ENCODE measurements at regions of chr14 and their contacts with region 1.

Region 1: DNA sequence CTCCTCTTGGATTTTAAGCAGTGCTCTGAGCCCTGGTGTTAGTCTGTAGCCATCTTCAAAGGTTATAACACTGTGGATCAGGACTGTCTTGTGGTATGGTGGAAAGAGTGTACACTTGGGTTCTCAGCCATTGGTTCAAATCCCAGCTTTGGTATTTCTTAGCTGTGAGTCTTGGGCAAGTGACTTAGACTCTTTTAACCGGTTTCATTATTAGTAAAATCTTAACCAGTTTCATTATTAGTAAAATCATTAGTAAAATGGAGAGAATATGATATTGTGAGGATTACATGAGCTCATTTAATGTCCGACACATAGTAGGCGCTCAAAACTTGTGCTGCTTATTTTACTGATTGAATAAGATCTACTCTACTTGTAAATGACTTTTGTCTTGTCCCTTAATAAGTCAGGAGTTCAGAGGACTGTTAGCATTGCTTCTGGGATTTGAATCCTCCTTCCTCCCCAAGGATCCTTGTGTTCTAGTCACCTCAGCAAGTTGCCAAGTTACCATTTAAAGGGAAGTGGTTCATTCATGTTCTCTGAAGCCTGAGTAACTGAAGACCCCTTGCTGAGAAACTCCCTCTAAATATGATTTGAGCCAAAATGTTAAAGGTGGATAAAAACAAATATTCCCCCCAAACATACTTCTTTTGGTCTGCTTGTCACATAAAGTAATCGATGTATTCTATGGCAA is 12.4 kb downstream of the TTLL5 start:
- DNase-seq: no peak
- H3K4me3 Mint-ChIP-seq: no peak overlapping the region
- H3K27ac Mint-ChIP-seq: no peak overlapping the region
- H3K4me1 Mint-ChIP-seq: peaks cover 8% of the 10 kb centered on the region
- H3K27me3 Mint-ChIP-seq: no peaks in the 10 kb centered on the region

Region 2: GRCh38 chr14:75560962-75561432 is 112.5 kb before region 1 on chr14:
- intact Hi-C with region 1: no loop called
- DNase-seq: no peak
- H3K4me3 Mint-ChIP-seq: peak overlapping the region; percentile 15
- H3K27ac Mint-ChIP-seq: peak overlapping the region; percentile 93
- H3K4me1 Mint-ChIP-seq: peaks cover 68% of the 10 kb centered on the region
- H3K27me3 Mint-ChIP-seq: no peaks in the 10 kb centered on the region

Region 3: GRCh38 chr14:75689012-75689411 is 15.5 kb after region 1 on chr14:
- intact Hi-C with region 1: loop called (anchors 1 kb)
- DNase-seq: no peak
- H3K4me3 Mint-ChIP-seq: no peak overlapping the region
- H3K27ac Mint-ChIP-seq: no peak overlapping the region
- H3K4me1 Mint-ChIP-seq: peaks cover 12% of the 10 kb centered on the region
- H3K27me3 Mint-ChIP-seq: no peaks in the 10 kb centered on the region